HEK293 (cell line): ENCODE measurements at regions of chr10 and their contacts with region 1.

Region 1: DNA sequence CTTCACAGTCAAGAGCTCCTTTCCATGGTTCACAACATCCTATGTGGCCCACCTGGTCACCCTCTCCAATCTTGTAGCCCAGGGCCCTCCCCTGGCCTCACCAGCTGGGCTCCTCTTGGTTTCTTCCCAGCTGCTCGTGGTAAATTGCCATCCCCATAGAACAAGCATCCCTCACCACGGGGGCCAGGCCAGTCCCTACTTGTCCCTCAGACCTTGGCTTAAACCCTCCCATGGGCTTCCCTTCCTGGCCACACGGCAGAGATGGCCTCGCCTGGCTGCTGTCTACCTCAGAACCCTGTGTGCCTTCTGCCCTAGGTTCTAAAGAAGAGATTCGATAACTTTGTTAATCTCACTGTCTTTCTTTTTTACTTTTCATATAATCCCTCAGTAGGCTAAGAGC is 153.3 kb upstream of the TCERG1L start:
- H3K4me3 ChIP-seq: no peak overlapping the region
- H3K27ac ChIP-seq: no peak overlapping the region
- H3K4me1 ChIP-seq: no peaks in the 10 kb centered on the region
- CTCF ChIP-seq: no peak

Region 2: GRCh38 chr10:131453594-131454355 is 11.0 kb before region 1 on chr10:
- CTCF ChIA-PET with region 1: interaction called, 10 read pairs
- POLR2A ChIA-PET with region 1: no interaction called
- H3K4me3 ChIP-seq: no peak overlapping the region
- H3K27ac ChIP-seq: no peak overlapping the region
- H3K4me1 ChIP-seq: no peaks in the 10 kb centered on the region
- CTCF ChIP-seq: peak; percentile 28; the same call in 1 of the 2 replicates

Region 3: GRCh38 chr10:131477457-131478121 is 12.8 kb after region 1 on chr10:
- CTCF ChIA-PET with region 1: no interaction called
- POLR2A ChIA-PET with region 1: no interaction called
- H3K4me3 ChIP-seq: no peak overlapping the region
- H3K27ac ChIP-seq: no peak overlapping the region
- H3K4me1 ChIP-seq: no peaks in the 10 kb centered on the region
- CTCF ChIP-seq: no peak